BJ (cell line): ENCODE measurements at regions of chr9 and their contacts with region 1.

Region 1: DNA sequence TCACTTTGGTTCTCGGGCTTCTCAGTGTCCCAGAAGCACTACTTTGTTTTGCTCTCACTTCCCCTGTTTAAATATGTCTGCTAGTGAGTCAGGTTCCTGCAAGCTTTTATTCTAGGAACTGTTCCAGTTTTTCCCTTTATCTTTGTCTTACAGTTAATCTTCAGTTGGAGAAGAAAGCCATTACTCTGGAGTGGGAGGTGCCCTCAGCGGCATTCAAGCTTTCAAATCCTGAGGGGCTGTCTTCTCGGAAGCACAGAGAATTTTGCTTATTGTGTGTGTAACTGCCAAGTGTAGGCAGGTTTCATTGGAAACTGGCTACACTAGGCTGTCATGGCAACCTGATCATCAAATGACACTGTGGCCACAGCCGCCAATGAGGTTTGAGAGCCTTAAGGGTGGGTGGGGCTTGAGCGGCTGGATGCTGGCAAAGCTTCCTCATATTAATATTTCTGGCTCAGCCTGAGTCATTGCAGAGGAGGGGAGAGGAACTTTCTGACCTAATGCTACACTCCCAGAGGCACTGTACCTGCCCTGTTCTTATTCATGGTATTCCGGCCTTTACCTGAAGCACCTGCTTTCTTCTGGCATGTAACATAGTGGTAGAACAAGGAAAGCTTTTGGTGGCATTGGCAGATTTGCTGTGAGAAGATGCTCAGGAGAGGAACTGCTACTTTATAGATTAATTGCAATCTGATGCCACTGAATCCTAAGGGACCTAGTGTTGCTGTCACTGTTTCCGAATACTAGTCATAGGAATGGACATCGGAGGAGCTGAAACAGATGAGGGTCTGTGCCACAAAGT is 26.3 kb downstream of the SLC25A25 start:
- DNase-seq: peak; percentile 91
- H3K4me3 ChIP-seq: peak overlapping the region; percentile 10
- H3K27me3 ChIP-seq: no peaks in the 10 kb centered on the region
- CTCF ChIP-seq: no peak

Region 2: DNA sequence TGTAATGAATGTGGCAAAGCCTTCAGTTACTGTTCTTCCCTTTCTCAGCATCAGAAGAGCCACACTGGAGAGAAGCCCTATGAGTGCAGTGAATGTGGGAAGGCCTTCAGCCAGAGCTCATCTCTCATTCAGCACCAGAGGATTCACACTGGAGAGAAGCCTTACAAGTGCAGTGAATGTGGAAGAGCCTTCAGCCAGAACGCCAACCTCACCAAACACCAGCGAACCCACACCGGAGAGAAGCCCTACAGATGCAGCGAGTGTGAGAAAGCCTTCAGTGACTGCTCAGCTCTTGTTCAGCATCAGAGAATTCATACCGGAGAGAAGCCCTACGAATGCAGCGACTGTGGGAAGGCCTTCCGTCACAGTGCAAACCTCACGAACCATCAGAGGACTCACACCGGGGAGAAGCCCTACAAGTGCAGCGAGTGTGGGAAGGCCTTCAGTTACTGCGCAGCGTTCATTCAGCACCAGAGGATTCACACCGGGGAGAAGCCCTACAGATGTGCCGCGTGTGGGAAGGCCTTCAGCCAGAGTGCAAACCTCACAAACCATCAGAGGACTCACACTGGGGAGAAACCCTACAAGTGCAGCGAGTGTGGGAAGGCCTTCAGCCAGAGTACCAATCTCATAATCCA is 650.0 kb before region 1 on chr9:
- CTCF ChIA-PET with region 1: no interaction called
- POLR2A ChIA-PET with region 1: interaction called, 20 read pairs
- DNase-seq: no peak
- H3K4me3 ChIP-seq: no peak overlapping the region
- H3K27me3 ChIP-seq: no peaks in the 10 kb centered on the region
- CTCF ChIP-seq: no peak

Region 3: GRCh38 chr9:128043467-128043868 is 50.9 kb before region 1 on chr9:
- CTCF ChIA-PET with region 1: no interaction called
- POLR2A ChIA-PET with region 1: no interaction called
- DNase-seq: no peak
- H3K4me3 ChIP-seq: no peak overlapping the region
- H3K27me3 ChIP-seq: no peaks in the 10 kb centered on the region; the same call in 1 of the 2 replicates
- CTCF ChIP-seq: no peak

Region 4: GRCh38 chr9:128696923-128697707 is 602.7 kb after region 1 on chr9:
- CTCF ChIA-PET with region 1: no interaction called
- POLR2A ChIA-PET with region 1: no interaction called
- DNase-seq: no peak
- H3K4me3 ChIP-seq: no peak overlapping the region
- H3K27me3 ChIP-seq: no peaks in the 10 kb centered on the region
- CTCF ChIP-seq: no peak